ENCODE measurements at regions of chr15 and their contacts with region 1.

Region 1: DNA sequence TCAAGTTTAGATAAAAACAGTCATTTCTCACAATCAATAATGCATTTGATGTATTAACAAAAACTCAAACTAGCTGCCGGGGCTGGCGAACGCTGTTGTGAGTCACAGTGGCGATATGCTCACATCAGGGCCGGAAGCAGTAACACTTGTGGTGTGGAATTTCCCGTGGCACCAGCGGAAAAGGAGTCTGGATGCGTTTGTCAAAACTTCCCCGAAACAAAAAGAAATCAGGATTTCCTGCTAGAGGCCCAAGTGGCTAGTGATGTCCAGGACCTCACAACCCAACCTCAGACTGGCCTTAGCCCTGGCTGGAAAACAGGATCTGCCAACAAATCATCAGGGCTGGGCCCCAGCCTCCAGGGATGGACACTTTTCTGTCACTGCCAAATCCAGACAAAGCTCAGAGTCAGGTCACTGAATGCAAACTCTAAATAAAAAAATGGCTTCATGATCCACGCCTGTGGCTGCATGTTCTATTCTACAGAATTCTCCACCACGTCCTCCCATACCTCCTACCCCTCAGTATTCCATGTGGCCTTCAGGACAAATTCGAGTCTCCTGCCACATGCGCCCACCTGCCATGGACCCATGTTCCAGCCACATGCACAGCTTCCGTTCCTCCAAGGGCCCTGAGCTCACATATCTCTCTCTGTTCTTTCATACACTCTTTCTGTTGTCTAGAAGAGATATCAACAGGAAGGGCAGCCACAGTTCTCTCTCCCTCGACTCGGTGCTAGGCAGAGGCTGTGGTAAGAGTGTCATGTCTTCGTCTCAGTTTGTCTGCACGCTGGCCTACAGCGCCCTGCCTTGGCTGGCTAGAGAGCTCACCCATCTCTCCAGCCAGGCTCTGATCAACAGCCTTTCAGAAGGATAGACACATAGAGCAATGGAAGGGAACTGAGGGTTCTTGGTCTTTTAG is 35.4 kb downstream of the EHD4 start:
- DNase-seq: peak; percentile 94
- H3K4me3 Mint-ChIP-seq: peak overlapping the region; percentile 68
- H3K27ac Mint-ChIP-seq: peak overlapping the region; percentile 98
- H3K4me1 Mint-ChIP-seq: peaks cover 83% of the 10 kb centered on the region
- H3K27me3 Mint-ChIP-seq: no peaks in the 10 kb centered on the region

Region 2: DNA sequence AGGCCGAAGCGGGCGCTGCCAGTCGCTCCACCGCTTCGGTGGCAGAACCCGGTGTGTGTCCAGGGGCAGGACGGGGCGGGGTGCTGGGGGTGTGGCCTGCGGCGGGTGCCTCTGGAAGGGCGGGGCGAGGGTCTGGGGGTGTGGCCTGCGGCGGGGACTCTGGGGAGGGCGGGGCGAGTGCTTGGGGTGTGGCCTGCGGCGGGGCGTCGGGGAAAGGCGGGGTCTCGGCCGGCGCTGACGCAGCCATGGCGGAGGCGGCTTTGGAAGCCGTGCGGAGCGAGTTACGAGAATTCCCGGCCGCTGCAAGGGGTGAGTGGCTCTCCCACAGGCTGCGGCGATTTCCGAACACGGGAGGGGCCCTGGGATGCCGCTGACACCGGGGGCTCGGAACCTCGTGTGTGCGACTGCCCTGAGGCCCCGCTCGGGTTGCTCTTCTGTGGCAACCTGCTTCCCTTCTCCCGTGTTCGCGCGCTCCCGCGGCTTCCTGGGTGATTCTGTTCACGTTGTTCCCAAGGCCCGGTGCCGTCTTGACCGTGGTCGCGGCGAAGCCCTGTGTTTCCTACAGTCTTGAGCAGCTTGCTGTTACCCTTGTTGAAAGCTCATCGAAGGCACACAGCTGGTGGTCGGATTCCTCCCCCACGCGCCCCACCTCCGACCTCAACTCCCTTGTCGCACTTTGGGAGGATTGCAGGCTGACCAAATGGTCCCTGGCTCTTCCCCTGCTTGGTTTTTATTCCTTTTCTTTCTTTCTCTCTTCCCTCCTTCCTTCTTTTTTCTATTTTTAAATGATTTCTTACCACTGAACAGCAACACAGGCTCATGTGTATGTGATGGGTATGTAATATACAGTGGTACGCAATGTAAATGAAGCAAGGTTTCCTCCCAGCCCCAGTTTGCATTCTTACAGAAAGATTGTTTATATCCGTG is 108.8 kb before region 1 on chr15 and contains the start of gene JMJD7:
- CTCF ChIA-PET with region 1: no interaction called
- POLR2A ChIA-PET with region 1: no interaction called
- intact Hi-C with region 1: loop called (anchors 2 kb)
- DNase-seq: peak; percentile 96
- H3K4me3 Mint-ChIP-seq: peak within 1 kb of the TSS; percentile 80
- H3K27ac Mint-ChIP-seq: peak within 1 kb of the TSS; percentile 52
- H3K4me1 Mint-ChIP-seq: peaks cover 40% of the 10 kb centered on the region
- H3K27me3 Mint-ChIP-seq: no peaks in the 10 kb centered on the region
- total RNA-seq, gene JMJD7: 17.9 to 24.8 TPM

Region 3: GRCh38 chr15:41904541-41905005 is 32.3 kb before region 1 on chr15:
- CTCF ChIA-PET with region 1: interaction called, 21 read pairs
- POLR2A ChIA-PET with region 1: interaction called, 4 read pairs
- intact Hi-C with region 1: no loop called
- DNase-seq: peak; percentile 81
- H3K4me3 Mint-ChIP-seq: no peak overlapping the region
- H3K27ac Mint-ChIP-seq: peak overlapping the region; percentile 54
- H3K4me1 Mint-ChIP-seq: peaks cover 9% of the 10 kb centered on the region
- H3K27me3 Mint-ChIP-seq: no peaks in the 10 kb centered on the region

Region 4: GRCh38 chr15:42056934-42057779 is 120.2 kb after region 1 on chr15:
- CTCF ChIA-PET with region 1: interaction called, 3 read pairs
- POLR2A ChIA-PET with region 1: no interaction called
- intact Hi-C with region 1: loop called (anchors 1 kb)
- DNase-seq: peak; percentile 81
- H3K4me3 Mint-ChIP-seq: peak overlapping the region; percentile 48
- H3K27ac Mint-ChIP-seq: no peak overlapping the region
- H3K4me1 Mint-ChIP-seq: peaks cover 13% of the 10 kb centered on the region
- H3K27me3 Mint-ChIP-seq: peaks cover 24% of the 10 kb centered on the region